ENCODE measurements at regions of chr5 and their contacts with region 1.

Region 1: DNA sequence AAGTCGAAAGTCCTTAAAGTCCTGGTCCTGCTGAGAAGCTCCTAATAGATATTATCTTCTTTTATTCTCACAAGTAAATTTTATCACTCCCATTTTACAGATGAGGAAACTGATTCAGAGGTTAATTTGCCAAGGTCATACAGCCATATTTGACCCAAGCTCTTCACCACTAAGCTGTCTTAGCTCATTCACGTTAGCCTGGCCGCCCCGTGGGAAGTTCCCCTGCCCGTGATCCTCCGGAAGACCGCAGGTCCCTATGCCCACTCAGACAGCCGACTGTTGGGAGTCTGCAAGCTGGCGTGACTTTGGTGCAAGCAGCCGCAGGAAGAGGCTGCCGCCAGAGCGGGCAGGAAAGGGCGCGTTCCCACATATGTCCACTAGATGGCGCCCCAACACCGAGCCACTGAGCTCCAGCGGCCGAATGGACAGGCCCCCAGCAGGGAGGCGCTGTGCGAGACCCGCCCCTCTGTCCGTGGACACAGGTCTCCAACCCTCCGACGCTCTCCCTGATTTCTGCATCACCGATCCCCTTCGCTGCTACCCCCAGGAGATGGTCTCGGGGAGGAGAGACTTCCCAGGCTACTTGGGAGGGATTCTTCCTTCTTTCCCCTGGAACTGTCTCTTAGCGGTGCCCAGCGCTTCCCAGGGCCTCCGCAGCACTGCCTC is 10.0 kb upstream of the ARAP3 start:
- DNase-seq: peak; percentile 87
- H3K4me3 ChIP-seq: peak overlapping the region; percentile 53
- H3K27ac ChIP-seq: peak overlapping the region; percentile 20
- H3K4me1 ChIP-seq: peaks cover 33% of the 10 kb centered on the region
- H3K27me3 ChIP-seq: no peaks in the 10 kb centered on the region
- CTCF ChIP-seq: peak; percentile 100

Region 2: DNA sequence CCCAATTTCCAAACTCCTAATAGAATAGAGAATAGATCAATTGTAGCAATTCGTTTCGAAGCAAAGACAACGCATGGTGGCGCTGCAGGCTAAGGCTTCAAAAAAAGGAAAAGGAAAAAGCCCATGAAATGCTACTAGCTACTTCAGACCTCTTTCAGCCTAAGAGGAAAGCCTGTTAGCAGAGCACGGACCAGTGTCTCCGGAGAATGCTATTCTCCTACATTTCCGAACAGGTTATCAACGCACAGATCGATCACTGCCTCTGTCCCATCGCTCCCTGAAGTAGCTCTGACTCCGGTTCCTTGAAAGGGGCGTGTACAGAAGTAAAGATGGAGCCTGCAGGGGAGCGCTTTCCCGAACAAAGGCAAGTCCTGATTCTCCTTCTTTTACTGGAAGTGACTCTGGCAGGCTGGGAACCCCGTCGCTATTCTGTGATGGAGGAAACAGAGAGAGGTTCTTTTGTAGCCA is 446.7 kb before region 1 on chr5 and contains the start of gene PCDHB15:
- intact Hi-C with region 1: no loop called
- DNase-seq: peak; percentile 32
- H3K4me3 ChIP-seq: peak within 1 kb of the TSS; percentile 60
- H3K27ac ChIP-seq: no peak within 1 kb of the TSS
- H3K4me1 ChIP-seq: no peaks in the 10 kb centered on the region
- H3K27me3 ChIP-seq: peaks cover 22% of the 10 kb centered on the region
- CTCF ChIP-seq: peak; percentile 56
- total RNA-seq, gene PCDHB15: 2.8 TPM

Region 3: DNA sequence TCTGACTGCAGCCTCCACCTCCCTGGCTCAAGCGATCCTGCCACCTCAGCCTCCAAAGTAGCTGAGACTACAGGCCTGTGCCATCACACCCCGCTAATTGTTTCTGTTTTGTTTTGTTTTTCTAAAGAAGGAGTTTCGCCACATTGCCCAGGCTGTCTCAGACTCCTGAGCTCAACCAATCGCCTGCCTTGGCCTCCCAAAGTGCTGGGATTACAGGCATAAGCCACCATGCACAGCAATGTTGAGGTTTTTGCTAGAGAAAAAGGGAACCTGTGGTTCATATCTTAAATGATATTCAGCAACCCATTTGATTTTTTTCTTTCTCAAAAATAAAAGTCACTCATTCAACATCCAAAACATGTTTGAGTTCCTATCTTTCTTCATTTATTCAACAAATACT is 211.3 kb after region 1 on chr5:
- intact Hi-C with region 1: no loop called
- DNase-seq: no peak
- H3K4me3 ChIP-seq: no peak overlapping the region
- H3K27ac ChIP-seq: no peak overlapping the region
- H3K4me1 ChIP-seq: no peaks in the 10 kb centered on the region
- H3K27me3 ChIP-seq: no peaks in the 10 kb centered on the region
- CTCF ChIP-seq: no peak

Region 4: GRCh38 chr5:141960449-141961202 is 268.6 kb after region 1 on chr5:
- intact Hi-C with region 1: loop called (anchors 5 kb)
- DNase-seq: peak; percentile 86
- H3K4me3 ChIP-seq: no peak overlapping the region
- H3K27ac ChIP-seq: peak overlapping the region; percentile 88
- H3K4me1 ChIP-seq: peaks cover 56% of the 10 kb centered on the region
- H3K27me3 ChIP-seq: no peaks in the 10 kb centered on the region
- CTCF ChIP-seq: peak; percentile 90